ENCODE measurements at regions of chr2 and their contacts with region 1.

Region 1: GRCh38 chr2:29841386-29842004 is 79.9 kb downstream of the ALK start:
- DNase-seq: peak; percentile 22 to 42
- H3K4me3 ChIP-seq: no peak overlapping the region
- H3K27ac ChIP-seq: no peak overlapping the region
- H3K4me1 ChIP-seq: no peaks in the 10 kb centered on the region
- H3K27me3 ChIP-seq: no peaks in the 10 kb centered on the region
- CTCF ChIP-seq: peak; percentile 67 to 98 (median 86)
- POLR2A ChIP-seq: no peak

Region 2: GRCh38 chr2:29295857-29296256 is 545.6 kb before region 1 on chr2:
- intact Hi-C with region 1: loop called (anchors 5 kb)
- DNase-seq: peak in 1 of 2 donors; percentile 29
- H3K4me3 ChIP-seq: no peak overlapping the region
- H3K27ac ChIP-seq: no peak overlapping the region
- H3K4me1 ChIP-seq: no peaks in the 10 kb centered on the region
- H3K27me3 ChIP-seq: no peaks in the 10 kb centered on the region
- CTCF ChIP-seq: peak in 4 of 6 experiments; percentile 22 to 38 (median 30)
- POLR2A ChIP-seq: no peak

Region 3: DNA sequence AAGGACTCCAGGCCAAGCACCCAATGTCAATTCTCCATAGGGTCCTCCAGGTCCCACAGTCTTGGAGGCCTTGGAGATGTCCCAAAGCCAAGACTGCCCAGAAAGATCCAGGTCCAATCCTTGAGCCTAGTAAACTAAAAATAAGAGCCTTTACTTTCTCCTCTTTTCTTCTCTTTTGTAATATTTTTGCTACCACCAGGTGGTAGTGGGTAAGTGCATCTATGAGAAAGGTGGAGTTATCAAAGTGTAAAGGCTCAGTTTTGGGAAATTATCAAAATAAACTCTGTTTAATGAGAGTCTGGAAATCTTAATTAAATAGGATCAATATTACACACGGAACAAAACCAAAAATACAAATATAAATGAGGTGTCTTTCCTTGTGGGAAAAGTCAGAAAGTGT is 196.5 kb before region 1 on chr2:
- intact Hi-C with region 1: loop called (anchors 5 kb)
- DNase-seq: no peak
- H3K4me3 ChIP-seq: no peak overlapping the region
- H3K27ac ChIP-seq: no peak overlapping the region
- H3K4me1 ChIP-seq: no peaks in the 10 kb centered on the region
- H3K27me3 ChIP-seq: no peaks in the 10 kb centered on the region
- CTCF ChIP-seq: peak in 4 of 6 experiments; percentile 17 to 51 (median 38)
- POLR2A ChIP-seq: no peak

Measured in thyroid gland (tissue), 4 donors.